Endothelial cell of umbilical vein (primary cell): ENCODE measurements at regions of chr2 and their contacts with region 1.

Region 1: DNA sequence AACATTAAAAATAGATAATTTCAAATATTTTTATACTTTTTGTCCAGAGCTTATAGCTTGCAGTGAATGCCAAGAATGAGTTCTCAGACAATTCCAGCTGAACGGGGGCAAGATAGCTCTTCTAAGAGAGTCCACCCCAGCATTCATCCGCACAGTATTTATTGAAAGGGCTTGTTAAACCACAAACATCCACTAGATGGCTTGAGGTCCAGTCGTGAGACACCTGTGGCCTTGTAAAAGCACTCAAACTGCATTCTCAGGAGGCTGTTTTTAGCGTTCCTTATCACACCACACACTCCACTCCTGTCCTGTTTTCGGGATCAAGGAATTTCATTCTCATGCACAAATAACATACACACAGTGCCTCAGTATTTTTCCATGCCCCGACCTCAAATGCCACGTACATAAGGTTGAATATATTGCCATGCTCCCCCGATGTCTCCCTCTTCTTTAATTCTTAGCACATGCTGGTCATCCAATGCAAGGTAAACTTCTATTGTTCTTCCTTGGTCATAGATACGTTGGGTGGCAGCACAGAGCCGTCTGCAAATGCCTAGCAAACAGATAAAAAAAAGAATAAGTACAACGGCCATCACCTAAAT is 47.4 kb downstream of the DNAJC10 start:
- DNase-seq: peak; percentile 51
- H3K4me3 ChIP-seq: no peak overlapping the region
- H3K27ac ChIP-seq: no peak overlapping the region
- H3K4me1 ChIP-seq: no peaks in the 10 kb centered on the region
- H3K27me3 ChIP-seq: no peaks in the 10 kb centered on the region
- CTCF ChIP-seq: peak; percentile 43 to 51
- POLR2A ChIP-seq: no peak

Region 2: GRCh38 chr2:182324665-182325064 is 438.7 kb before region 1 on chr2:
- CTCF ChIA-PET with region 1: no interaction called
- POLR2A ChIA-PET with region 1: no interaction called
- dilution Hi-C with region 1: no loop called
- intact Hi-C with region 1: no loop called
- DNase-seq: peak; percentile 84
- H3K4me3 ChIP-seq: no peak overlapping the region
- H3K27ac ChIP-seq: no peak overlapping the region
- H3K4me1 ChIP-seq: no peaks in the 10 kb centered on the region
- H3K27me3 ChIP-seq: peaks cover 6 to 18% of the 10 kb centered on the region in 2 experiments
- CTCF ChIP-seq: no peak
- POLR2A ChIP-seq: no peak

Region 3: GRCh38 chr2:182779323-182779722 is 15.9 kb after region 1 on chr2:
- CTCF ChIA-PET with region 1: interaction called, 13 read pairs
- POLR2A ChIA-PET with region 1: no interaction called
- dilution Hi-C with region 1: no loop called
- intact Hi-C with region 1: no loop called
- DNase-seq: no peak
- H3K4me3 ChIP-seq: no peak overlapping the region
- H3K27ac ChIP-seq: no peak overlapping the region
- H3K4me1 ChIP-seq: no peaks in the 10 kb centered on the region
- H3K27me3 ChIP-seq: no peaks in the 10 kb centered on the region
- CTCF ChIP-seq: no peak
- POLR2A ChIP-seq: no peak

Region 4: DNA sequence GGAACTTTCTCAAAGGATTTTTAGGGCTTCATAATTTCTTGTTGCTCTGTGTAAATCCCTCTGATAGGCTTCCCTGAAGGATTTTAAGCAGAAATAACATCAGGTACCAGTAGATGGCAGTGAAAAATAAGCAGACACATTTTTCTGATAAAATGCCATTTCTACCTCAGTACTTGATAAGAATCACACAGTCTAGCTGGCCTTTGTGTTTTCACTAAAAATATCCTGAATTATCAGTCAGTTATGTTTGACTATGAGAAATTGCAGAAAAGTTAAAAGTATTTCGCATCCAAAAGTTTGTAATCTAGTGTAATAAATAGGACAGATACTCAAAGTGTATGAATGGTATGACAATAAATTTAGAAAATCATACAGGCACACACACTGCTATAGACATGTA is 21.4 kb after region 1 on chr2:
- CTCF ChIA-PET with region 1: interaction called, 13 read pairs
- POLR2A ChIA-PET with region 1: no interaction called
- dilution Hi-C with region 1: no loop called
- intact Hi-C with region 1: no loop called
- DNase-seq: peak; percentile 65
- H3K4me3 ChIP-seq: no peak overlapping the region
- H3K27ac ChIP-seq: no peak overlapping the region
- H3K4me1 ChIP-seq: peaks cover 2% of the 10 kb centered on the region
- H3K27me3 ChIP-seq: no peaks in the 10 kb centered on the region
- CTCF ChIP-seq: peak; percentile 24 to 38
- POLR2A ChIP-seq: no peak

Region 5: GRCh38 chr2:182866461-182867406 is 103.3 kb after region 1 on chr2 and contains the start of gene FRZB:
- CTCF ChIA-PET with region 1: interaction called, 5 read pairs
- POLR2A ChIA-PET with region 1: no interaction called
- dilution Hi-C with region 1: no loop called
- intact Hi-C with region 1: loop called (anchors 5 kb)
- DNase-seq: peak; percentile 69
- H3K4me3 ChIP-seq: peak within 1 kb of the TSS; percentile 31 to 70 (median 54)
- H3K27ac ChIP-seq: no peak within 1 kb of the TSS
- H3K4me1 ChIP-seq: peaks cover 11% of the 10 kb centered on the region
- H3K27me3 ChIP-seq: peaks cover 8 to 13% of the 10 kb centered on the region in 2 experiments
- CTCF ChIP-seq: no peak
- POLR2A ChIP-seq: no peak
- total RNA-seq, gene FRZB: 0.09 TPM in 1 of 2 replicates, not detected in the other